ENCODE measurements at regions of chr18 and their contacts with region 1.

Region 1: GRCh38 chr18:34867520-34867919 is 157.4 kb downstream of the DTNA start:
- DNase-seq: peak; percentile 10
- H3K4me3 ChIP-seq: no peak overlapping the region
- H3K27ac ChIP-seq: no peak overlapping the region
- H3K4me1 ChIP-seq: no peaks in the 10 kb centered on the region
- CTCF ChIP-seq: peak; percentile 61

Region 2: DNA sequence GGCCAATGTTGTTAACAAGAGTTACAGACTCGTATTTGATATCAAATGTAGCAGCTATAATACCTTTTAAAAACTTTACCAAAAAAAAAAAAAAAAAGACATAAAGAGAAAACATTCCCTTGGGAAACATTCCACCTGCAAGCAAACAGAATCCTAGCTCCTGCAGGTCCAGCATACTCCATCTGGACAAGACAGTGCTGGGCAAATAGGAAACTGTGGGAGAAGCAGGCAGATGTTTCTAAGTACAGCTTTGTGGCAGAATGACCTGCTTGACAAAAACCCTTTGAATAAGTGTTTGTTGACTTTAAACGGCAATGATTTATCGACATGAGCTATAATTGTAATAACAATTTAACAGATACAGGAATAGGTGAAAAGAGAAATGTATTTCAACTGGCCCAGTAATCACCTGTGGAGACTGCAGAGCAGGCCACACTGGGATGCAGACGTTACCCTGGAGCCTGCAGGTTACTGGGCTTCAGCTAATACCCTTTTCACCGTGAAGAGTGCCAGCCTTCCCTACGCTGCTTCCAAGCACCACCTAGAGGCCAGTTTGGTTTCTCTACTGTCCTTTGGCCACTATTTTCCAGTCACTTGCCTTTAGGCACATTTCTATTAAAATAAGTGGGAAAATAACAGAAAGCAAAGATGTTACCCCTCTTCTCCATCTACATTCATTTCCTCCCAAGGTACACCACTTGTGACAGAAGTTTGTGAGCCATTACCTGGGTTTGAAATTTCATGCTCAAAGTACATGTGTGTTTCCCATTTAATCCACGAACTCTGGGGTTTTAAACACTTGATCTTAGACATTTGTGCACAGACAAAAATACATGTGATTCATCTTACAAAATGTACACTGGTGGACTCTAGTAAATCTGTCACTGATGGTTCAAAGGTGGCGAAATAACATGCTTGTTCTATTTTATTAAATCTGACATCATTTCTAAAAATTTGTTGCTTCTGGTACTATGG is 276.4 kb after region 1 on chr18:
- CTCF ChIA-PET with region 1: no interaction called
- POLR2A ChIA-PET with region 1: interaction called, 3 read pairs
- intact Hi-C with region 1: loop called (anchors 2 kb)
- DNase-seq: peak; percentile 48
- H3K4me3 ChIP-seq: no peak overlapping the region
- H3K27ac ChIP-seq: no peak overlapping the region
- H3K4me1 ChIP-seq: peaks cover 34% of the 10 kb centered on the region
- CTCF ChIP-seq: peak; percentile 71